Psoas muscle (tissue), 8 donors: ENCODE measurements at regions of chr17 and their contacts with region 1.

Region 1: DNA sequence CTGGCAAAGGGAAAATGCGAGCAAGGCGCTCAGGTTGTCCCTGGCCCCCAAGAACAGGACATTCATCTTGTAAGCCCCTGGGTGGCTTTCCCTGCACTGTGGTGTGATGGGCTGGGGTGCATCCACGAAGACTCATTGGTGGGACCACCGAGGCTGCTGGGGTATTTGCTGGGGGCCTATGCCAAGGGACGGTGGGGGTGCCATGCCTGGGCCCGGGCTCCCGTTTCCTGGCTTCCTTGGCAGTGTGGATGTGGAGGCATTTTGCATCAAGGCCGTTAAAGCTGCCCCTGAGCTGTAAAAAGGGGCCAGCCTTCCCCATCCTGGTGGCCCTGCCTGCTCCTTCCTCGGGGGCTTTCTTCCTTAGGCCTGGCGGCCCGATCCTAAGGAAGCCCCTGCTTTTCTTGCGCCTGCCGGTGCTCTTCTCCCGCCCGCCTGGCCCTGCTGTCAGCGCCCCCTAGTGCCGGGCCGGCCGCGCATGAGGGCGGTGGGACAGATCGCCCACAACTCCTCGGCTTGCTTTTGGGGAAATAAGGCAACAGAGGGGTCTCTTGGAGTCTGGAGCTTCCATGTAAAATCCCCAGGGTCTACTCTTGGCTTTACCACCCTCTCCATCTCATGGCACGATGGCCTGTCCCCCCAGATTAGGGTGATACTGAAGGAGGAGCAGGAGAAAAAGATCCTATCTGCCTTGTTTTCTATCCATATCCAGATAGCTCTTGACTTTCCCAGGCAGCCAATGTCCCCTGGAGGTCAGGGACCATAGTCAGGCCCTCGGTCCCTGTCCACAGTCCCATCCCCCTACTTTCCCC is 9.8 kb upstream of the TBX2 start:
- DNase-seq: peak in 1 of 2 donors; percentile 58
- ATAC-seq: peak; percentile 48 to 81 (median 56)
- H3K4me3 ChIP-seq: peak overlapping the region; percentile 11
- H3K27ac ChIP-seq: no peak overlapping the region
- H3K4me1 ChIP-seq: peaks cover 4% of the 10 kb centered on the region
- H3K27me3 ChIP-seq: no peaks in the 10 kb centered on the region
- CTCF ChIP-seq: peak; percentile 79

Region 2: GRCh38 chr17:60712675-60713074 is 677.2 kb before region 1 on chr17:
- intact Hi-C with region 1: loop called in 1 of 2 experiments (anchors 10 kb)
- DNase-seq: no peak
- ATAC-seq: no peak
- H3K4me3 ChIP-seq: no peak overlapping the region
- H3K27ac ChIP-seq: no peak overlapping the region
- H3K4me1 ChIP-seq: no peaks in the 10 kb centered on the region
- H3K27me3 ChIP-seq: no peaks in the 10 kb centered on the region
- CTCF ChIP-seq: no peak

Region 3: DNA sequence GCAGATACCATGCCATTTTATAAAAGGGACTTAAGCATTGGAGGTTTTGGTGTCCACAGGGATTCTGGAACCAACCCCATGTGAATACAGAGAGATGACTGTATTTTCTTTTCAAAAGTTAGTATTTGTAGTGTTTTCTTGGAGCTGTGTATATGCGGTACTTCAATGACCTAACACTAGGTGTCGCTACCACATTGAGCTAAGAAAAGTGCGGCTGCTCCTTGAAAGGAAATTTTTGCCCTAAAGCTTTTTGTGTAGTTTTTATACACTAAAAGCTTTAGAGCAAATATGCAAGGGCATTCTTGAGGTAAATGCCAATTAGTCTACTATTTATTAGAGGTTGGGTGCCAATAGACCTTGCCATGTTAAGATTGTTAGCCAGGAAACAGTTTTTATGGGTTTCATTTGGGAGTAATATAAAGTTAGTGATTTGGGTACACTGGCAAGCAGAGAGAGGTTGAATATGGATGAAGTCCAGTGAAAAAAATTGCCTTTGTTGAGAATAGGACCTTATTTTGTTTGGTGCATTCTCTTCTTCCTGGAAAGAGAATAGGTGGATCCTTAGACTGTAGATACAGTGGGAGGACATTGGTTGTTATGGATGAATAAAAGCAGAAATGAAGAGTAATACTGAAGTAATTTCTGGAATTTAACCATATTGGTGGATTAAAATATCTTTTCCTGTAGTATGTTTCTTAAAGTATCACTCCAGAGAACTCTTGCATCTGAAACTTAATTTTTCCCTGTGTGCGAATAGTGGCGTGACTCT is 668.9 kb before region 1 on chr17:
- intact Hi-C with region 1: loop called (anchors 10 kb)
- DNase-seq: no peak
- ATAC-seq: peak in 2 of 4 donors; percentile 42 to 69
- H3K4me3 ChIP-seq: no peak overlapping the region
- H3K27ac ChIP-seq: no peak overlapping the region
- H3K4me1 ChIP-seq: no peaks in the 10 kb centered on the region
- H3K27me3 ChIP-seq: no peaks in the 10 kb centered on the region
- CTCF ChIP-seq: peak; percentile 89

Region 4: GRCh38 chr17:61002316-61002736 is 387.5 kb before region 1 on chr17:
- intact Hi-C with region 1: loop called in 1 of 2 experiments (anchors 10 kb)
- DNase-seq: no peak
- ATAC-seq: peak in 1 of 4 donors; percentile 50
- H3K4me3 ChIP-seq: no peak overlapping the region
- H3K27ac ChIP-seq: no peak overlapping the region
- H3K4me1 ChIP-seq: no peaks in the 10 kb centered on the region
- H3K27me3 ChIP-seq: no peaks in the 10 kb centered on the region
- CTCF ChIP-seq: peak; percentile 48

Region 5: DNA sequence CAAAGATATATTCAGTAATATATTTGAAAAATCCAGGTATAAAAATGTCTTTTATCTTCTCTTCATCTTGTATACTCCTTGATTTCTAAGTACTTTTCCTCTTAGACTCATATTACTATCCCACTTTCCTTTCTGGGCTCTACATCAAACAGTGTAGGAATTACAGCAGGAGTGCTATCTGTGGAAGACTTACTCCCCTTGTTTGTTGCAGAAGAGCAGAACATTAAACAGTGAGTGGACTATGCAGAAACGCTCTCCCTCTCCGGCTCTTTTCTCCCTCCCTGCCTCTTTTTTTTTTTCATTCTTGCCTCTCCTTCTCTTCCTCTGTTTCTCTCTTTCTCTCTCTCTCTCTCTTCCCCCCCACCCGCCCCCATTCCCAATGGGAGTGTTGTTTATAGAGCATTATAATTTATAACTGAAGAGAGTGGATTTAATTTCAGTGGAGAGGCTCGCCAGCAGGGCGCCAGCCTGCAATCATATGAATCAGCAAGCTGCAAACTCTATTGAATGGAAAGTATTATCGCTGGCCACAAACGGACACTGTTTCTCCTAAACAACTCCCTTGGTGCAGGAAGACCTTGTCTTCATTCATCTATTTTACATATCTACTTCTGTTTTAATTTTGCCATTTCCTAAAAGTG is 232.5 kb before region 1 on chr17:
- intact Hi-C with region 1: loop called in 1 of 2 experiments (anchors 10 kb)
- DNase-seq: no peak
- ATAC-seq: peak in 2 of 4 donors; percentile 45 to 67
- H3K4me3 ChIP-seq: peak overlapping the region; percentile 26
- H3K27ac ChIP-seq: no peak overlapping the region
- H3K4me1 ChIP-seq: peaks cover 5% of the 10 kb centered on the region
- H3K27me3 ChIP-seq: no peaks in the 10 kb centered on the region
- CTCF ChIP-seq: no peak

Region 6: DNA sequence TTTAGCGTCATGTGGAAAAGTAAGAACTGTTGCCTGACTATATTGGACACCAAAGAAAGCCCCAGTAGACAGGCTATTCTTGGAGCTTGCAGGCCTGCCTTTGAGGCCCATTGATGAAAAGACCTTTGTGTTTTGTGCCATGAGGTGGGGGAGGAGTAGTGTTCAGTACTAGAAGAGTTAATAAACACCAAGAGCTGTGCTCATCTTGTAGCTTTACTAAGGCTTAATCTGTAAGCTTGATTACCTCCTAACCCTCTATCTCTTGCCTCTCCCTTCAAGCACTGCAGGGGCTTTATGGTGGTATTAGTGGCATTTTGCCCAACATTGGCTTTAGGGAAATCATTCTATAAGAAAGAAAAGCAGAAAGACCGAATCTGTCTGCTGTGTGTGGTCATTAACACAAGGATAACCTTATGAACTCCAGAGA is 210.5 kb before region 1 on chr17:
- intact Hi-C with region 1: no loop called
- DNase-seq: no peak
- ATAC-seq: no peak
- H3K4me3 ChIP-seq: no peak overlapping the region
- H3K27ac ChIP-seq: no peak overlapping the region
- H3K4me1 ChIP-seq: no peaks in the 10 kb centered on the region
- H3K27me3 ChIP-seq: no peaks in the 10 kb centered on the region
- CTCF ChIP-seq: no peak